Activated B cell treated with CpG ODN at 0.5 μM for 24 hours (primary cell): ENCODE measurements at regions of chr13 and their contacts with region 1.

Region 1: GRCh38 chr13:111114362-111115060 is 599 bp upstream of the ARHGEF7 start:
- DNase-seq: no peak
- ATAC-seq: peak; percentile 34
- H3K4me3 Mint-ChIP-seq: peak overlapping the region; percentile 86
- H3K27ac Mint-ChIP-seq: no peak overlapping the region
- H3K4me1 Mint-ChIP-seq: peaks cover 16% of the 10 kb centered on the region
- H3K27me3 Mint-ChIP-seq: peaks cover 68% of the 10 kb centered on the region
- CTCF ChIP-seq: no peak

Region 2: GRCh38 chr13:111153279-111153976 is 38.9 kb after region 1 on chr13:
- CTCF ChIA-PET with region 1: no interaction called
- POLR2A ChIA-PET with region 1: no interaction called
- intact Hi-C with region 1: loop called (anchors 2 kb)
- DNase-seq: peak; percentile 98
- ATAC-seq: peak; percentile 85
- H3K4me3 Mint-ChIP-seq: peak overlapping the region; percentile 92
- H3K27ac Mint-ChIP-seq: peak overlapping the region; percentile 88
- H3K4me1 Mint-ChIP-seq: peaks cover 30% of the 10 kb centered on the region
- H3K27me3 Mint-ChIP-seq: no peaks in the 10 kb centered on the region
- CTCF ChIP-seq: no peak

Region 3: DNA sequence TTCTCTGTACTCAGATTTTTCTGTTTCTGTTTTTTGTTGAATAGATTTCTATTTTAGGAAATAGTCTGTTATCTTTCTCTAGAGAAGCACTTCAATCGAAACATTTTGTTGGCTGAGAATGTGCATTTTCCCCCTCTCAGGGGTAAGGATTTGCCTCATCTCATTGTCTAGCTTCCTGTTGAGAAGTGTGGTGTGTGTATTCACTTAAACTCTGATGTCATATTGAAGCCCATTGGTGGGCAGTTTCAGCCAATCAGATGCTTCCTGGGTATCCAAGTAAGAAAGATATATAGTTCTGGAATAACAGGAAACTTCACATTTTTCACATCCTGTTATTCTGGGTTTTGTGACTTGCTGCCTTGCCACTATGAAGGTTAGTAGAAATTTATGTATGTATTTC is 88.2 kb after region 1 on chr13:
- CTCF ChIA-PET with region 1: no interaction called
- POLR2A ChIA-PET with region 1: interaction called, 12 read pairs
- intact Hi-C with region 1: loop called (anchors 5 kb)
- DNase-seq: no peak
- ATAC-seq: peak; percentile 49
- H3K4me3 Mint-ChIP-seq: peak overlapping the region; percentile 28
- H3K27ac Mint-ChIP-seq: peak overlapping the region; percentile 74
- H3K4me1 Mint-ChIP-seq: peaks cover 87% of the 10 kb centered on the region
- H3K27me3 Mint-ChIP-seq: no peaks in the 10 kb centered on the region
- CTCF ChIP-seq: no peak